Left cardiac atrium (tissue), 4 donors: ENCODE measurements at regions of chr14 and their contacts with region 1.

Region 1: GRCh38 chr14:23320774-23321571 is at the start of gene PABPN1:
- DNase-seq: peak; percentile 99
- ATAC-seq: peak; percentile 94
- total RNA-seq, gene PABPN1: 74.4 to 94.1 TPM

Region 2: GRCh38 chr14:23454445-23454856 is 133.5 kb after region 1 on chr14:
- intact Hi-C with region 1: loop called in 1 of 2 experiments (anchors 10 kb)
- DNase-seq: no peak
- ATAC-seq: no peak

Region 3: GRCh38 chr14:23469127-23469905 is 148.3 kb after region 1 on chr14 and contains the start of gene NGDN:
- intact Hi-C with region 1: loop called in 1 of 2 experiments (anchors 5 kb)
- DNase-seq: peak; percentile 93
- ATAC-seq: peak; percentile 95 to 97
- total RNA-seq, gene NGDN: 20.1 to 23.6 TPM

Region 4: GRCh38 chr14:23567192-23568020 is 246.4 kb after region 1 on chr14 and contains the start of gene AP1G2:
- intact Hi-C with region 1: loop called in 1 of 2 experiments (anchors 10 kb)
- DNase-seq: peak; percentile 88
- ATAC-seq: peak; percentile 84 to 90
- total RNA-seq, gene AP1G2: 16.5 to 32.3 TPM